ENCODE measurements at regions of chr2 and their contacts with region 1.

Region 1: GRCh38 chr2:102473020-102473419 is at the start of gene SLC9A4:
- DNase-seq: peak; percentile 77
- ATAC-seq: no peak
- H3K4me3 Mint-ChIP-seq: no peak within 1 kb of the TSS
- H3K27ac Mint-ChIP-seq: no peak within 1 kb of the TSS
- H3K4me1 Mint-ChIP-seq: no peaks in the 10 kb centered on the region
- H3K27me3 Mint-ChIP-seq: peaks cover 13% of the 10 kb centered on the region
- total RNA-seq, gene SLC9A4: 0.11 TPM in 1 of 2 experiments, not detected in the other

Region 2: GRCh38 chr2:102436323-102436722 is 36.7 kb before region 1 on chr2:
- CTCF ChIA-PET with region 1: no interaction called
- POLR2A ChIA-PET with region 1: no interaction called
- intact Hi-C with region 1: no loop called
- DNase-seq: peak; percentile 38
- ATAC-seq: no peak
- H3K4me3 Mint-ChIP-seq: no peak overlapping the region
- H3K27ac Mint-ChIP-seq: peak overlapping the region; percentile 71
- H3K4me1 Mint-ChIP-seq: peaks cover 30% of the 10 kb centered on the region
- H3K27me3 Mint-ChIP-seq: no peaks in the 10 kb centered on the region

Region 3: GRCh38 chr2:102487761-102488466 is 14.9 kb after region 1 on chr2:
- CTCF ChIA-PET with region 1: interaction called, 21 read pairs
- POLR2A ChIA-PET with region 1: interaction called, 3 read pairs
- intact Hi-C with region 1: no loop called
- DNase-seq: no peak
- ATAC-seq: no peak
- H3K4me3 Mint-ChIP-seq: no peak overlapping the region
- H3K27ac Mint-ChIP-seq: no peak overlapping the region
- H3K4me1 Mint-ChIP-seq: peaks cover 8% of the 10 kb centered on the region
- H3K27me3 Mint-ChIP-seq: peaks cover 23% of the 10 kb centered on the region

Region 4: DNA sequence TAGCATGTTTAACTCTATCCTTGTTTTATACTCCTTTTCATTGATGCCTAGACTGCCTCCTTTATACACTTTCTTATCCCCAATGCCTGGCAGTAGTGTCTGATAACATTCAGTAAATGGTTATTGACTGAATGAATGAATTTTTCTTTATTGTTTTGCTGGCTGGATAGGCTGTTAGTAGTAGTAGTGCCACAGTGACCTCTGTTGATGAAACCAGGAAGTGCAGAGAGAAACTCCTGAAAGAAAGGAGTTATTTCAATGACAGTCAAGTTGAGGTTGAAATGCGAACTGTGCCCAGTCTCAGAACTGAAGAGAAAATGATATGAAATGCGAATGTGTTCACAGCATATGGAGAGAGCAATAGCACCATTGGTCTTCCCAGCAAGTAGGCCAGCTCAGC is 119.6 kb after region 1 on chr2:
- CTCF ChIA-PET with region 1: interaction called, 27 read pairs
- POLR2A ChIA-PET with region 1: no interaction called
- intact Hi-C with region 1: loop called (anchors 1 kb)
- DNase-seq: peak; percentile 39
- ATAC-seq: no peak
- H3K4me3 Mint-ChIP-seq: no peak overlapping the region
- H3K27ac Mint-ChIP-seq: no peak overlapping the region
- H3K4me1 Mint-ChIP-seq: no peaks in the 10 kb centered on the region
- H3K27me3 Mint-ChIP-seq: peaks cover 4% of the 10 kb centered on the region

Region 5: DNA sequence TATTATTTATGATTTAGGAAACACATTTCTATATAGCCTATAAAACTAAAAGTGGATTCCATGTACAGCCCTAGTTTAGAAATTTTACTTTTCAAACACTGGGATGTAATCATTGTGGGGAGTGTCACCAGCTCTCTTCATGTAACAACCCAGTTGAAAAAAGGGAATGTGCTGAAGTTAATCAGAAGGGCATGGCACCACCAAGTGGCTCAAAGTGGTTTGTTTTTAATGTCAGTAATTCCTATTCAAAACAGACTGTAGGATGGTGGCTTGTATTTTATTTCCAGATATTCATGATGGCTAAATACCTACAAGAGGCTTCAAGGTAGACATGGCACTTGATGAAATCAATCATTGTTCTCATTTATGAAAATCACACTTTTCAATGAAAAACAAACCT is 230.7 kb after region 1 on chr2:
- CTCF ChIA-PET with region 1: interaction called, 15 read pairs
- POLR2A ChIA-PET with region 1: no interaction called
- intact Hi-C with region 1: loop called (anchors 2 to 5 kb)
- DNase-seq: peak; percentile 40
- ATAC-seq: no peak
- H3K4me3 Mint-ChIP-seq: no peak overlapping the region
- H3K27ac Mint-ChIP-seq: no peak overlapping the region
- H3K4me1 Mint-ChIP-seq: no peaks in the 10 kb centered on the region
- H3K27me3 Mint-ChIP-seq: peaks cover 4% of the 10 kb centered on the region

Region 6: GRCh38 chr2:102796337-102796736 is 323.3 kb after region 1 on chr2:
- CTCF ChIA-PET with region 1: no interaction called
- POLR2A ChIA-PET with region 1: no interaction called
- intact Hi-C with region 1: no loop called
- DNase-seq: no peak
- ATAC-seq: no peak
- H3K4me3 Mint-ChIP-seq: no peak overlapping the region
- H3K27ac Mint-ChIP-seq: no peak overlapping the region
- H3K4me1 Mint-ChIP-seq: no peaks in the 10 kb centered on the region
- H3K27me3 Mint-ChIP-seq: no peaks in the 10 kb centered on the region

Region 7: GRCh38 chr2:104004821-104005220 is 1531.8 kb after region 1 on chr2:
- CTCF ChIA-PET with region 1: no interaction called
- POLR2A ChIA-PET with region 1: no interaction called
- intact Hi-C with region 1: no loop called
- DNase-seq: no peak
- ATAC-seq: no peak
- H3K4me3 Mint-ChIP-seq: no peak overlapping the region
- H3K27ac Mint-ChIP-seq: no peak overlapping the region
- H3K4me1 Mint-ChIP-seq: no peaks in the 10 kb centered on the region
- H3K27me3 Mint-ChIP-seq: no peaks in the 10 kb centered on the region

Measured in activated CD4-positive, alpha-beta T cell treated with anti-CD3 and anti-CD28 coated beads for 36 hours (primary cell).